ENCODE measurements at regions of chr1 and their contacts with region 1.

Region 1: GRCh38 chr1:65459397-65459768 is 38.9 kb downstream of the LEPR start:
- DNase-seq: peak; percentile 34
- CTCF ChIP-seq: peak; percentile 46

Region 2: GRCh38 chr1:65214340-65215027 is 244.9 kb before region 1 on chr1:
- CTCF ChIA-PET with region 1: interaction called, 12 read pairs
- POLR2A ChIA-PET with region 1: no interaction called
- DNase-seq: no peak
- CTCF ChIP-seq: no peak

Region 3: DNA sequence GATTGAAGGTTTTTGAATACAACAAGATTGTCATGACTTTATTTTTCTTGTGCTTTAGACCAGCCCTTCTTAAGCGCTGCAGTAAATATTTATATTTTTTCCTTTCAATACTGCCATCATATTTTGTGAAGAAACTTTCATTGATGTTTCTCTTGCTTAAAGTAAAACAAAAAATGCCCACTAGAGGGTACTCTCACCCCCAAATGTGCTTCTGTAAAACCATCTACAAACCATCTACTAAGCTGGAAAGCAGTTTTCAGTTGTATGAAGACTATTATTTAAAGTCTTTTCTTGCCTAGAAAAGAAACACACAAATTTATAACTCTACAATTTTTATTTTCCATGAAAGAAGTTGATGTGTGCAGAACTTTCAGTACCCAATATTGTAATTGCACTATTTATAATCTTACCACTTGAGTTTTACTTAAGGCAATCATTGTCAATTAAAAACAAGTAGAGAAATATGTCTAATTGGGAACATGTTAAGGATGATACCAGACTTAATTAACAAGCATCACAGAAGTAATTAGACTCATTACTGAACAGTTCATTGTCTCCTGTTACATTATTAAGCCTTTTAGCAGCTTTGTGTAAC is 28.2 kb before region 1 on chr1:
- CTCF ChIA-PET with region 1: interaction called, 11 read pairs
- POLR2A ChIA-PET with region 1: no interaction called
- DNase-seq: peak; percentile 19
- CTCF ChIP-seq: peak; percentile 31

Region 4: GRCh38 chr1:65437616-65438015 is 21.8 kb before region 1 on chr1:
- CTCF ChIA-PET with region 1: interaction called, 11 read pairs
- POLR2A ChIA-PET with region 1: no interaction called
- DNase-seq: no peak
- CTCF ChIP-seq: no peak

Measured in GM10248 (cell line).